SK-N-SH (cell line): ENCODE measurements at regions of chr1 and their contacts with region 1.

Region 1: GRCh38 chr1:70906800-70907199 is 140.8 kb downstream of the PTGER3 start:
- DNase-seq: no peak
- H3K4me3 ChIP-seq: no peak overlapping the region
- H3K27ac ChIP-seq: no peak overlapping the region
- H3K4me1 ChIP-seq: no peaks in the 10 kb centered on the region; a peak in 1 of 4 replicates
- H3K27me3 ChIP-seq: no peaks in the 10 kb centered on the region
- CTCF ChIP-seq: no peak
- EP300 ChIP-seq: no peak
- RAD21 ChIP-seq: no peak

Region 2: GRCh38 chr1:70896224-70896623 is 10.6 kb before region 1 on chr1:
- CTCF ChIA-PET with region 1: interaction called, 13 read pairs
- POLR2A ChIA-PET with region 1: no interaction called
- DNase-seq: no peak
- H3K4me3 ChIP-seq: no peak overlapping the region
- H3K27ac ChIP-seq: no peak overlapping the region
- H3K4me1 ChIP-seq: peaks cover 0 to 10% of the 10 kb centered on the region in 2 experiments; a peak in 1 of 4 replicates
- H3K27me3 ChIP-seq: no peaks in the 10 kb centered on the region
- CTCF ChIP-seq: peak; percentile 48
- EP300 ChIP-seq: no peak
- RAD21 ChIP-seq: peak; percentile 44